Mammary epithelial cell (primary cell): ENCODE measurements at regions of chr1 and their contacts with region 1.

Region 1: DNA sequence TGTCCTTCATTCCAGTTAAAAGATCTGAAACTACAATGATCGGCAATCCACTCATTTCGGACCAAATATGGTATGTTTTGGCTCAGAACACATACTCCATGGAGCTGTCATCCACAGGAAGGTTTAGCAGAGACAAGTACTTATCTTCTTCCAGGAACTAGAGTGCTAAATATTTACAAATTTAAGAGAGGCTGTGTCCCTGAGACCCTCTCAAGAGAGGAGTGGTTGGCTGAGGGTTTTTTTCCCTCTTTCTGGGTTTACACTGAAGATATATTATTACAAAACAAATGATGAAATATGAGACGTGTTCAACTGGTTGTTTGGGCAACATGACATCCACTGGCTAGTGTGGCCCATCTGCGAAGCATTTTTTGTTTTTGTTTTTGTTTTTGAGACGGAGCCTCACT is 25.9 kb upstream of the NID1 start:
- DNase-seq: no peak
- H3K4me3 ChIP-seq: no peak overlapping the region
- H3K27ac ChIP-seq: no peak overlapping the region
- H3K4me1 ChIP-seq: no peaks in the 10 kb centered on the region
- H3K27me3 ChIP-seq: no peaks in the 10 kb centered on the region
- CTCF ChIP-seq: no peak

Region 2: GRCh38 chr1:235990376-235991085 is 100.2 kb before region 1 on chr1:
- CTCF ChIA-PET with region 1: no interaction called
- dilution Hi-C with region 1: loop called (anchors 5 kb)
- in situ Hi-C with region 1: no loop called
- intact Hi-C with region 1: no loop called
- DNase-seq: no peak
- H3K4me3 ChIP-seq: no peak overlapping the region
- H3K27ac ChIP-seq: no peak overlapping the region
- H3K4me1 ChIP-seq: no peaks in the 10 kb centered on the region
- H3K27me3 ChIP-seq: no peaks in the 10 kb centered on the region
- CTCF ChIP-seq: no peak

Region 3: DNA sequence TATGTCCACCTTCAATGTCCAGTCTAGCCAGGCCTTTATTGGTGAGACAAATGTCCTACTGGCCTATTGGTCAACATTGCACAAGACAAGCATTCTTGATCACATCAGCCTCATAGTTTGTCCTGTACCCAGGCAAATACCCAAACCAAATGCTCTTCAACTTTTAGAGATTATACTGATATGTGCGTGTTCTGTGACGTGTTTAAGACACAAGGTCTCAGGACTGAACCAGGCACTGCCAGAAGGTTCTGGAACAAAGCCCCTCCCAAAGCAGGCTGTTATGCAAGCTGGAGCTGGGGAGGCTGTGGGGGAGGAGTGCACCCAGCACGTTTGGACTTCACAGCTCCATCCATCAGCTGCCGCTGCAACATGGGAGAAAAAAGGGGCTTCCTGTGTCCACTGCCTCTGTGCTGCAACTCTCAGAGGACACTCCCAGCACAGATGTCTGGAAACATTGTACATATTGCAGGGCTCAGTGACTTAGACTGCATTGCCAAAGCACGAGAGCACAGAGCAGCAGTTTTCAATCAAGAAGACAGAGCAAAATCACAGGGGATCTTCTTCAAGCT is 71.8 kb before region 1 on chr1:
- CTCF ChIA-PET with region 1: no interaction called
- dilution Hi-C with region 1: loop called (anchors 5 kb)
- in situ Hi-C with region 1: no loop called
- intact Hi-C with region 1: no loop called
- DNase-seq: no peak
- H3K4me3 ChIP-seq: no peak overlapping the region
- H3K27ac ChIP-seq: no peak overlapping the region
- H3K4me1 ChIP-seq: peaks cover 22% of the 10 kb centered on the region
- H3K27me3 ChIP-seq: no peaks in the 10 kb centered on the region
- CTCF ChIP-seq: no peak

Region 4: GRCh38 chr1:236141305-236141929 is 50.7 kb after region 1 on chr1:
- CTCF ChIA-PET with region 1: no interaction called
- dilution Hi-C with region 1: no loop called
- in situ Hi-C with region 1: no loop called
- intact Hi-C with region 1: no loop called
- DNase-seq: peak; percentile 40
- H3K4me3 ChIP-seq: peak overlapping the region; percentile 43 to 98 (median 65)
- H3K27ac ChIP-seq: no peak overlapping the region
- H3K4me1 ChIP-seq: peaks cover 22% of the 10 kb centered on the region
- H3K27me3 ChIP-seq: no peaks in the 10 kb centered on the region
- CTCF ChIP-seq: no peak